GM12878 (cell line): ENCODE measurements at regions of chr6 and their contacts with region 1.

Region 1: DNA sequence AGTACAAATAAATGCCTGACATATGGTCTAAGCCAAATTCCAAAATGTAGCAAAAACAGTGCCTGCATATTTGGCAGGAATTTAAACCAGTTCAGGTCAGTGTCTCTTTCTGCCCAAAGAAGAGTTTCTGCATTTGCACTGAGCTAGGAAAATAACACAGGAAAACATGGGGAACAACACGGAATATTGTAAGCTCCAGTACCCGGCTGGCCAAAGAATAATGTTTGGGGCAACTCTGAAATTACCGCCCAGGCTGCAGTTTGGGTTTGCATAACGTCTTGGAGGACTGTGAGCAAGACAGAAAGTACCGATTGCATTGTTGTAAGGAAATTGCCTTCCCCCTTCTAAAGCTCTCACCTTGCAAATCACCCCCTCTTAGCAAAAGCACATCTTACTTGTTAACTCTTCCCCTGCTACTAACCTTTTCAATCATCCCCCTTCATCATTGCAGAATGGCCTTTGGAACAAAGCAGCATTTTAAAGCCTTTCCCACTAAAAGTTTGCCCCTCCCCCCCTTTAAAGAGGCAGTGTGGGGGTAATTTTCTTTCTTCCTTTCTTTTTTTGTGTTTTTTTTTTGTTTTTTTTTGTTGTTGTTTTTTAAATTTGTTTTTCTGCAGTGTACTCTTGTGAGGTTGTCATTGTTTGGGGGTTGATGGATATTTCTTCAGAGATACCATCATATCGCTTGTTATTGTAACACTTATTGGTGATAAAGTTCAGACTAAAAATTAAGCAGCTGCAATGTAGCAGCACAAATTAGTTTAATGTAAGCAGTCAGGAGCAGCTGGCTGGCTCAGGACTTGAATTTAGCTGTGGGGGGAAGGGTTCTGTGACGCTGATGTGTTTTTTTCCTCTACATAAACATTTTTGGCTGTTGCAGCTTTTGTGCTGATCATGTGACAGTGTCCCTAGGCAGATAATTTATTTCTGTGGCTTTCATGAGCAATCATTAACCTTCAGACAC is 100.0 kb upstream of the CITED2 start:
- DNase-seq: no peak
- ATAC-seq: peak; percentile 95
- H3K4me3 ChIP-seq: no peak overlapping the region
- H3K27ac ChIP-seq: no peak overlapping the region
- H3K4me1 ChIP-seq: no peaks in the 10 kb centered on the region
- H3K27me3 ChIP-seq: no peaks in the 10 kb centered on the region
- CTCF ChIP-seq: no peak
- EP300 ChIP-seq: no peak
- POLR2A ChIP-seq: no peak
- RAD21 ChIP-seq: no peak

Region 2: GRCh38 chr6:139485742-139486475 is 11.5 kb after region 1 on chr6:
- CTCF ChIA-PET with region 1: interaction called, 5 read pairs
- POLR2A ChIA-PET with region 1: interaction called, 4 read pairs
- RAD21 ChIA-PET with region 1: no interaction called
- SMC1A ChIA-PET with region 1: interaction called, 12 read pairs
- in situ Hi-C with region 1: no loop called
- intact Hi-C with region 1: no loop called
- DNase-seq: no peak
- ATAC-seq: no peak
- H3K4me3 ChIP-seq: no peak overlapping the region
- H3K27ac ChIP-seq: no peak overlapping the region
- H3K4me1 ChIP-seq: no peaks in the 10 kb centered on the region
- H3K27me3 ChIP-seq: no peaks in the 10 kb centered on the region
- CTCF ChIP-seq: no peak
- EP300 ChIP-seq: no peak
- POLR2A ChIP-seq: no peak
- RAD21 ChIP-seq: no peak

Region 3: DNA sequence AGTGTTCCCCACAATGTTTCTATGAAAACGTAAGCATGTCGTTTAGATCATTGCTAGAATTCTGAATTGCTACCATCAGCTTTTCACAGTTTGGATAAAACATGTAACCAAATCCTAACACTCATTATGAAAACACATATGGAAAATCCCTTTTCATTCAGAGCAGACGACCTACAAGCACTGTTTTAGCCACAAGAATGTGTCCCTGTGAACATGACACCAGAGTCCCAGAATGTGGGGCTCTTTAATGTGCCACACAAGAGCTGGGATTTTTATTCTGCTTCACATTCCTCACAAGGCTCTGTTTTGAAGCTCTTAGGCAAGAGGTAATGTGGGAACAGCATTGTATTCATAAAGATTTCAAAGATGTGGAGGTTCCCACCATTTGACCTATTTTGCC is 41.1 kb after region 1 on chr6:
- CTCF ChIA-PET with region 1: no interaction called
- POLR2A ChIA-PET with region 1: no interaction called
- RAD21 ChIA-PET with region 1: interaction called, 5 read pairs
- SMC1A ChIA-PET with region 1: no interaction called
- in situ Hi-C with region 1: no loop called
- intact Hi-C with region 1: loop called (anchors 1 kb)
- DNase-seq: no peak
- ATAC-seq: peak; percentile 89
- H3K4me3 ChIP-seq: no peak overlapping the region
- H3K27ac ChIP-seq: no peak overlapping the region
- H3K4me1 ChIP-seq: no peaks in the 10 kb centered on the region
- H3K27me3 ChIP-seq: no peaks in the 10 kb centered on the region
- CTCF ChIP-seq: no peak
- EP300 ChIP-seq: no peak
- POLR2A ChIP-seq: no peak
- RAD21 ChIP-seq: no peak